Colonic mucosa (tissue), 4 donors: ENCODE measurements at regions of chr3 and their contacts with region 1.

Region 1: GRCh38 chr3:117355566-117355965 is 646.0 kb downstream of the TUSC7 start:
- DNase-seq: peak; percentile 20
- H3K4me3 ChIP-seq: no peak overlapping the region
- H3K27ac ChIP-seq: no peak overlapping the region
- H3K4me1 ChIP-seq: no peaks in the 10 kb centered on the region
- H3K27me3 ChIP-seq: no peaks in the 10 kb centered on the region
- CTCF ChIP-seq: peak; percentile 39

Region 2: DNA sequence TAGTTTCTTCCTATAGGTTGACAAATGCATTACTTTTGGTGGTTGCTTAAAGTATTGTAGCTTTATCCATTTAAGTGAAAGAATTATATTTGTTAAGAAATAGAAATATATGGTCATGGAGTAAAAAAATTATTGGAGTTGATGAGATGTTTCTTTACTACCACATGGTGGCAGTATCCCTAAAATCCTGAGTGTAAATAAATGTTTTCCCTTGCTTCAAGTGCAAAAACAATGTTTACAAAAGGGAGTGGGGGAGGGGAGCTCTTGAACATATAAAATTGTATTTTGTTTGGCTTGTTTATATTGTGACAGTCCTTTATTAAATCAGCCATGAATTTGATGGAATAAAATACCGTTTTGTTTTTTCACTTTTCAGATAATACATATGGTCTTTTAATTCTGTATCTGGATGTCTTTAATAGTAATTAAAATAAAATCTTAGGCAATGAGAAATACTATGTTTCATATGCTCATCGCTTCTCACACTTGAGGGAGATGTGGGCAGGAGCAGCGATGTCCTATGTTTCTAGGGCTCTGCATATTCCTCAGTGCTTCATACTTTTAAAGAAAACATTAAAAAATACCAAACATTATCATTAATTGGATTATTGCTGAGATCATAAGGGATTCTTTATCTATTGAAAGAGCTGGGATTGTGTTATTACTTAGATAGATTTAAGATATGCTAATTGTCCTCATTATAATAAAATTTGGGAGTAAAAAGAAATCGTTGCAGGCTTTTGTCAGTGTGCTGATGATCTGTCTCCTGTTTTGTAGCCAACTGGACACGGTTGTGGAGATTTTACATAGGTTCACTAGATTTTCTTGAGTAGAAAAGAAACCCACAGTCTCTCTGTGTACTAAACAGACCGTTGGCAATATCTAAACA is 296.3 kb before region 1 on chr3:
- intact Hi-C with region 1: loop called (anchors 10 kb)
- DNase-seq: no peak
- H3K4me3 ChIP-seq: no peak overlapping the region
- H3K27ac ChIP-seq: no peak overlapping the region
- H3K4me1 ChIP-seq: no peaks in the 10 kb centered on the region
- H3K27me3 ChIP-seq: no peaks in the 10 kb centered on the region
- CTCF ChIP-seq: peak; percentile 52

Region 3: DNA sequence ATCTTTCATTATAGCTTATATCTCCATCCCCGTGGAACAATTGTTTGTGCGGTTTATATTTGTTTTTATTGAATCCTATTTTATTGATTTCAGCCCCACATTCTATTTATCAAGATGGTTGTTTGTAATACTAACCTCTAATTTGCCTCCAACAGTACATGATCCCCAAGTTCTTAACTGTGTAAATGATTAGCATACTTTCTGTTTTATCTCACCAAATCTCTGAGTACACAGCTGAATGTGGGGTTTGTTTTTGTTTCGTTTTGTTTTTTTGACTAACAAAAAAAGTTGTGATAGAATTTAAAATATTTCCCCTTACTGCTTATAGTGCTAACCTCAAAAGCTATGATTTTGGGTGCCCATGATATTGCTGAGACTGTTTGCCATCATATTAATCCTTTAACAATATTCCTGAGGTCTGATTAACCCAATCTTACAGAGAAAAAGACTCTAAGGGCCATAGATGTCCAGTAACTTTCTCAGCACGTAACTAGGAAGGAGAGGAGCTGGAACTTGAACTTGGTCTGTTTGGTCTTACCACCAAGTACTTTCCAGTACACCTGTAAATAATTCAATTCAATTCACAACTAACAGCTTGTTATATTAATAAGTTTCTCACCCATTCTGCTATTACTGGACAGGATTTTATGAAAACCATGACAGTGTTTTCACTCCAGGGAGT is 143.8 kb after region 1 on chr3:
- intact Hi-C with region 1: no loop called
- DNase-seq: no peak
- H3K4me3 ChIP-seq: no peak overlapping the region
- H3K27ac ChIP-seq: no peak overlapping the region
- H3K4me1 ChIP-seq: no peaks in the 10 kb centered on the region
- H3K27me3 ChIP-seq: no peaks in the 10 kb centered on the region
- CTCF ChIP-seq: no peak